PC-9 (cell line): ENCODE measurements at regions of chr14 and their contacts with region 1.

Region 1: GRCh38 chr14:23186913-23187654 is 3.6 kb upstream of the SLC7A8 start:
- DNase-seq: peak; percentile 20 to 41
- H3K4me3 ChIP-seq: no peak overlapping the region
- H3K27ac ChIP-seq: no peak overlapping the region
- H3K4me1 ChIP-seq: peaks cover 10% of the 10 kb centered on the region
- H3K27me3 ChIP-seq: no peaks in the 10 kb centered on the region
- CTCF ChIP-seq: peak; percentile 81

Region 2: DNA sequence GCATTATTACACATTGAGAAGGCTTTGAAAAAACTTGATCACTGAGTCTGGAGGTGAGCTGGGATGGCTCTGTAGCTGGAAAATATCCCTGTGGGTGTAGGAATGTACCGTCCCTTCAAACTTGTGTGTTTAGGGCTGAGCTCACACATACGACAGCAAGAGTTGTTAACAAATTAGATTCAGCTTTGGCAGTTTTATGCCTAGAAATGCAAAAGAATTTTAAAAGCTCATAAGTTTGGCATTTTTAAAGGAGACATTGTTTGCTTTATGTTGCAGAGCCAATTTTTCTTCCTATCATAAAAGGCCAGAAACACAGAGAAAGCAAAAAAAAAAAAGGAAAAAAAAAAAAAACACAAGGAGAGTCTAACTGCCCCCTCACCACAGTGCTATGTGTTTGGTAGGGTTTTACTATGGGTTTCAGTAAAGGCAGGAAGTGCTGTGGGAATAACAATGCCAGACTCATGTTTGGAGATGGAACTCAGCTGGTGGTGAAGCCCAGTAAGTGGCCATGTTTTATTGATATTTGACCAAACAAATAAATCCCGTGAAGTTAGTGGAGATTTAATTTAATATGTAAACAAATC is 676.5 kb before region 1 on chr14:
- CTCF ChIA-PET with region 1: interaction called, 12 read pairs
- POLR2A ChIA-PET with region 1: no interaction called
- intact Hi-C with region 1: no loop called
- DNase-seq: no peak
- H3K4me3 ChIP-seq: no peak overlapping the region
- H3K27ac ChIP-seq: no peak overlapping the region
- H3K4me1 ChIP-seq: no peaks in the 10 kb centered on the region
- H3K27me3 ChIP-seq: no peaks in the 10 kb centered on the region
- CTCF ChIP-seq: no peak

Region 3: GRCh38 chr14:23294734-23295561 is 107.9 kb after region 1 on chr14:
- CTCF ChIA-PET with region 1: no interaction called
- POLR2A ChIA-PET with region 1: no interaction called
- intact Hi-C with region 1: loop called (anchors 5 kb)
- DNase-seq: peak in 1 of 2 experiments; percentile 27
- H3K4me3 ChIP-seq: no peak overlapping the region
- H3K27ac ChIP-seq: no peak overlapping the region
- H3K4me1 ChIP-seq: peaks cover 1% of the 10 kb centered on the region
- H3K27me3 ChIP-seq: no peaks in the 10 kb centered on the region
- CTCF ChIP-seq: peak; percentile 85